HCT116 (cell line): ENCODE measurements at regions of chr10 and their contacts with region 1.

Region 1: GRCh38 chr10:68720793-68721672 is at the start of gene CCAR1:
- DNase-seq: peak; percentile 97
- ATAC-seq: peak; percentile 98
- H3K4me3 ChIP-seq: peak within 1 kb of the TSS; percentile 91 to 94
- H3K27ac ChIP-seq: peak within 1 kb of the TSS; percentile 82
- H3K4me1 ChIP-seq: peaks cover 0 to 9% of the 10 kb centered on the region in 2 experiments; a peak in 2 of 4 replicates
- H3K27me3 ChIP-seq: no peaks in the 10 kb centered on the region
- CTCF ChIP-seq: no peak
- POLR2A ChIP-seq: peak; percentile 80
- RAD21 ChIP-seq: no peak
- total RNA-seq, gene CCAR1: 84.4 TPM

Region 2: GRCh38 chr10:68550747-68551411 is 170.2 kb before region 1 on chr10:
- CTCF ChIA-PET with region 1: no interaction called
- POLR2A ChIA-PET with region 1: interaction called, 4 read pairs
- RAD21 ChIA-PET with region 1: no interaction called
- intact Hi-C with region 1: loop called (anchors 1 kb)
- DNase-seq: peak; percentile 81
- ATAC-seq: peak; percentile 78
- H3K4me3 ChIP-seq: no peak overlapping the region
- H3K27ac ChIP-seq: no peak overlapping the region
- H3K4me1 ChIP-seq: peaks cover 4 to 31% of the 10 kb centered on the region in 2 experiments; a peak in 3 of 4 replicates
- H3K27me3 ChIP-seq: no peaks in the 10 kb centered on the region
- CTCF ChIP-seq: peak; percentile 42 to 90 (median 79); a peak in 5 of 6 replicates
- POLR2A ChIP-seq: no peak
- RAD21 ChIP-seq: peak; percentile 76

Region 3: DNA sequence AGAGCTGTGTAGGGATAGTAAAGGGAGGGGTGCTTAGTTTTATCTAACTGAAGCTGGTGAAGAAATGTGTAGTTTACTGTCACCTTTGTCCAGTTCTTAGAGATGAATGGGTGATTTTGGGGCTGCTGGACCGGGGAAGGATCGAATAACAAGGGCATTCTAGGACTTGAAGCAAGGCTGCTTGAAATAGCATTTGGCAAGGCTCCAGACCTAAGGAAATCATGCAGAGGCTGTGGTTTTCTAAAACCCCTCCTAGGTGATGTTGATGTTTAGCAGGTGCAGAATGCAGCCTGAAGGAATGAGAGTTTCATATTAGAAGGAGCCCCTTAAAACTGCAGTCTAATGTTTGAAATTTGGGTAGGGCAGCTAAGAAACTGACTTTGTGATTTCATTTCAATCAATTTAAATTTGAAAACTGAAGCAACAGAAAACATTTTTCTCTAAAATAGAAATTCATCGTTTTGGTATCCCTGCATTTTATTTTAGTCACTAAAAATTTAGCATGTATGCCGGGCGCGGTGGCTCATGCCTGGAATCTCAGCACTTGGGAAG is 92.4 kb before region 1 on chr10:
- CTCF ChIA-PET with region 1: no interaction called
- POLR2A ChIA-PET with region 1: no interaction called
- RAD21 ChIA-PET with region 1: no interaction called
- intact Hi-C with region 1: no loop called
- DNase-seq: no peak
- ATAC-seq: no peak
- H3K4me3 ChIP-seq: no peak overlapping the region
- H3K27ac ChIP-seq: no peak overlapping the region
- H3K4me1 ChIP-seq: peaks cover 6 to 13% of the 10 kb centered on the region in 2 experiments; a peak in 2 of 4 replicates
- H3K27me3 ChIP-seq: no peaks in the 10 kb centered on the region
- CTCF ChIP-seq: no peak
- POLR2A ChIP-seq: no peak
- RAD21 ChIP-seq: no peak

Region 4: DNA sequence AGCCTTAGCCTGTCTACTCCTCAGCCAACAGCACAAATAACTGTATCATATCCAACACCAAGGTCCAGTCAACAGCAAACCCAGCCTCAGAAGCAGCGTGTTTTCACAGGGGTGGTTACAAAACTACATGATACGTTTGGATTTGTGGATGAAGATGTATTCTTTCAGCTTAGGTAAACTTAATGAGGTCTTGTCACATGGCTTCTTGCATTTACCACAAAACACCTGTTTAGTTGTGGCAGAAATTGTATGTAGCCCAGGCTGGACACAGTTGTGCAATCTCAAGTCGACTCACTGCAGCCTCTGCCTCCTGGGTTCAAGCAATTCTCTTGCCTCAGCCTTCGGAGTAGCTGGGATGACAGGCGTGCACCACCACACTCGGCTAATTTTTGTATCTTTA is 21.4 kb after region 1 on chr10:
- CTCF ChIA-PET with region 1: no interaction called
- POLR2A ChIA-PET with region 1: no interaction called
- RAD21 ChIA-PET with region 1: no interaction called
- intact Hi-C with region 1: no loop called
- DNase-seq: no peak
- ATAC-seq: no peak
- H3K4me3 ChIP-seq: no peak overlapping the region
- H3K27ac ChIP-seq: no peak overlapping the region; the same call in 1 of the 2 replicates
- H3K4me1 ChIP-seq: no peaks in the 10 kb centered on the region
- H3K27me3 ChIP-seq: no peaks in the 10 kb centered on the region
- CTCF ChIP-seq: no peak
- POLR2A ChIP-seq: no peak
- RAD21 ChIP-seq: no peak